ENCODE measurements at regions of chr11 and their contacts with region 1.

Region 1: GRCh38 chr11:19071255-19071654 is 10.7 kb upstream of the MRGPRX2 start:
- DNase-seq: peak; percentile 48
- ATAC-seq: peak; percentile 96
- H3K4me3 ChIP-seq: no peak overlapping the region
- H3K27ac ChIP-seq: no peak overlapping the region
- H3K4me1 ChIP-seq: no peaks in the 10 kb centered on the region
- H3K27me3 ChIP-seq: peaks cover 0 to 2% of the 10 kb centered on the region in 2 experiments; a peak in 2 of 4 replicates
- CTCF ChIP-seq: peak; percentile 93 to 99 (median 99)
- EP300 ChIP-seq: no peak
- POLR2A ChIP-seq: no peak
- RAD21 ChIP-seq: peak; percentile 85

Region 2: DNA sequence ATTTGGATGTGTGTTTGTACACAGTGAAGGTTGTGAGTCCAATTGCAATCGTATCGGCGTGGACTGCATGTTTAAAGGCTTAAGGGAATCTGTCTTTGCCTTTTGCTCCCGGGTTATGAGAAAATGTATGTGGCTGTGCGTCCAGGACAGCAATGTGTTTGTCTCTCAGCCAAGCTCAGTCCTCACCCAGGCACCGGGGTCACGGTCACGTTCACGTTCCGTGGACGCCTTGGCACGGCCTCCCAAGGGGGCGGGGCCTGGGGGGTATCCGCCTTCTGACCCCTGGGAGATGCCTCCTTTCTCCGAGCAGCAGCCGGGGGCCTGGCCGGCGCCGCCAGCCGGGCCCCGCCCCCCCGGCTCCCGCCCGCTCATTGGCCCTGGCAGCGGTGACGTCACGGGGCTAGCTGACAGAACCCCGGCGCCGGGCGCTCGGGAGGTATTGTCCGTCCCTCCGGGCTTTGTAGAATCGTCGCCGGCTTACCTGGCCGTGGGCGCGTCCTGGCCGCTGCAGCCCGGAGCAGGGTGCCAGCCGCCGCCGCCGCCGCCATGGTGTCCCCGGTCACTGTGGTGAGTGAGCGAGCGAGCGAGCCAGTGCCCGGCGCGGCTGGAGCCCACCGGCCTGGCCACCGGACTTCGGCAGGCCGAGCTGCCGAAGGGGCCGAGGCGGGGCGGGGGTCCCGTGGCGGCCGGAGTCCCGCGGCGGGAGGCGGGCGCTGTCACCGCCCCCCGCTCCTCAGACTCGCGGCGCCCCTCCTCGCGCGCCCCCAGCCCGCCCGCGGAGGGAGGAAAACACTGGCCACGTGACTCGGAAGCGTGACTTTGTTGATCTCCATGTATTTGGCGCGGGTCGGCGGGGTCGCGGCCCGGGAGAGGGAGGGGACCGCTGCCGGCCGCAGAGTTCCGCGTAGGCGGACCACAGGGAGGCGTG is 372.6 kb before region 1 on chr11 and contains the start of gene TMEM86A:
- CTCF ChIA-PET with region 1: no interaction called
- POLR2A ChIA-PET with region 1: no interaction called
- RAD21 ChIA-PET with region 1: no interaction called
- SMC1A ChIA-PET with region 1: no interaction called
- in situ Hi-C with region 1: no loop called
- intact Hi-C with region 1: no loop called
- DNase-seq: no peak
- ATAC-seq: peak; percentile 94
- H3K4me3 ChIP-seq: peak within 1 kb of the TSS; percentile 73
- H3K27ac ChIP-seq: no peak within 1 kb of the TSS
- H3K4me1 ChIP-seq: peaks cover 6% of the 10 kb centered on the region; the same call in 1 of the 2 replicates
- H3K27me3 ChIP-seq: peaks cover 5 to 16% of the 10 kb centered on the region in 2 experiments
- CTCF ChIP-seq: no peak
- EP300 ChIP-seq: no peak
- POLR2A ChIP-seq: no peak
- RAD21 ChIP-seq: no peak
- polyA plus RNA-seq, gene TMEM86A: not detected

Region 3: GRCh38 chr11:19200410-19201201 is 129.4 kb after region 1 on chr11:
- CTCF ChIA-PET with region 1: interaction called, 11 read pairs
- POLR2A ChIA-PET with region 1: no interaction called
- RAD21 ChIA-PET with region 1: no interaction called
- SMC1A ChIA-PET with region 1: no interaction called
- in situ Hi-C with region 1: no loop called
- intact Hi-C with region 1: no loop called
- DNase-seq: no peak
- ATAC-seq: peak; percentile 82
- H3K4me3 ChIP-seq: no peak overlapping the region
- H3K27ac ChIP-seq: no peak overlapping the region
- H3K4me1 ChIP-seq: no peaks in the 10 kb centered on the region
- H3K27me3 ChIP-seq: no peaks in the 10 kb centered on the region
- CTCF ChIP-seq: no peak
- EP300 ChIP-seq: no peak
- POLR2A ChIP-seq: no peak
- RAD21 ChIP-seq: no peak

Region 4: GRCh38 chr11:19259487-19260345 is 188.5 kb after region 1 on chr11:
- CTCF ChIA-PET with region 1: interaction called, 38 read pairs
- POLR2A ChIA-PET with region 1: no interaction called
- RAD21 ChIA-PET with region 1: interaction called, 8 read pairs
- SMC1A ChIA-PET with region 1: interaction called, 8 read pairs
- in situ Hi-C with region 1: no loop called
- intact Hi-C with region 1: loop called (anchors 5 kb)
- DNase-seq: no peak
- ATAC-seq: peak; percentile 91
- H3K4me3 ChIP-seq: no peak overlapping the region
- H3K27ac ChIP-seq: no peak overlapping the region
- H3K4me1 ChIP-seq: no peaks in the 10 kb centered on the region; the same call in 1 of the 2 replicates
- H3K27me3 ChIP-seq: no peaks in the 10 kb centered on the region; a peak in 1 of 4 replicates
- CTCF ChIP-seq: peak; percentile 90 to 96 (median 93)
- EP300 ChIP-seq: no peak
- POLR2A ChIP-seq: no peak
- RAD21 ChIP-seq: peak; percentile 78

Region 5: GRCh38 chr11:19561011-19561410 is 489.8 kb after region 1 on chr11:
- CTCF ChIA-PET with region 1: interaction called, 77 read pairs
- POLR2A ChIA-PET with region 1: no interaction called
- RAD21 ChIA-PET with region 1: interaction called, 3 read pairs
- SMC1A ChIA-PET with region 1: no interaction called
- in situ Hi-C with region 1: loop called (anchors 5 kb)
- intact Hi-C with region 1: no loop called
- DNase-seq: no peak
- ATAC-seq: no peak
- H3K4me3 ChIP-seq: no peak overlapping the region
- H3K27ac ChIP-seq: no peak overlapping the region
- H3K4me1 ChIP-seq: no peaks in the 10 kb centered on the region
- H3K27me3 ChIP-seq: no peaks in the 10 kb centered on the region; a peak in 1 of 4 replicates
- CTCF ChIP-seq: no peak
- EP300 ChIP-seq: no peak
- POLR2A ChIP-seq: no peak
- RAD21 ChIP-seq: no peak

Measured in GM12878 (cell line).